AG04449 (cell line): ENCODE measurements at regions of chr4 and their contacts with region 1.

Region 1: GRCh38 chr4:103008875-103009729 is 10.4 kb downstream of the SLC9B1 start:
- DNase-seq: no peak
- H3K4me3 ChIP-seq: no peak overlapping the region
- CTCF ChIP-seq: peak; percentile 62

Region 2: DNA sequence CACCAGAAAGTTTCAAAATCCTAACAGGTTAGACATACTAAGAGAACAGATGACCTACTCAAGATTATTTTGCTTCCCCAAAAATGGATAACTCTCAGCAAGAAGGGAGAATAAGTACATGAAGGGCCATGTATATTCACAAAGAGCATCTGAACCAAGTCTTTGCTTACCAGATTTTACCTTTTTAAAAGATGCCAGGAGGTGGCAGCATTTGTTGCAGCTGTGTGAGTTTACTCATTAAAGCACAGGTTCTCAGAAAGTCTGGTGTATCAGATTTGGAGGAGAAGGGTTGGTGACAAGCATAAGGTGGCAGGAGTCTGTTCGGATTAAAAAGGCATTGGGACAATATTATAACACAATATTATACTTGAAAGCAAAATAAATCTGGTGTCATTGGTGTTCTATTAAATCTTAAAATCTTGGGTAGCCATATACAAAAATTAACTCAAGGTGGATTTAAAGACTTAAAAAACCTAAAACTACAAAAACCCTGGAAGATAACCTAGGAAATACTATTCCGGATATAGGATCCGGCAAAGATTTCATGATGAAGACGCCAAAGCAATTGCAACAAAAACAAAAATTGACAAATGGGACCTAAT is 559.2 kb before region 1 on chr4:
- CTCF ChIA-PET with region 1: interaction called, 24 read pairs
- POLR2A ChIA-PET with region 1: no interaction called
- DNase-seq: no peak
- H3K4me3 ChIP-seq: no peak overlapping the region
- CTCF ChIP-seq: peak; percentile 50

Region 3: GRCh38 chr4:102610007-102610406 is 399.1 kb before region 1 on chr4:
- CTCF ChIA-PET with region 1: interaction called, 11 read pairs
- POLR2A ChIA-PET with region 1: no interaction called
- DNase-seq: no peak
- H3K4me3 ChIP-seq: no peak overlapping the region
- CTCF ChIP-seq: peak; percentile 26